Endothelial cell of umbilical vein (primary cell): ENCODE measurements at regions of chr1 and their contacts with region 1.

Region 1: GRCh38 chr1:53393325-53393792 is 65.5 kb upstream of the LRP8 start:
- DNase-seq: peak; percentile 64
- H3K4me3 ChIP-seq: no peak overlapping the region
- H3K27ac ChIP-seq: no peak overlapping the region
- H3K4me1 ChIP-seq: no peaks in the 10 kb centered on the region
- H3K27me3 ChIP-seq: peaks cover 7 to 10% of the 10 kb centered on the region in 2 experiments
- CTCF ChIP-seq: peak; percentile 87 to 91
- POLR2A ChIP-seq: no peak

Region 2: DNA sequence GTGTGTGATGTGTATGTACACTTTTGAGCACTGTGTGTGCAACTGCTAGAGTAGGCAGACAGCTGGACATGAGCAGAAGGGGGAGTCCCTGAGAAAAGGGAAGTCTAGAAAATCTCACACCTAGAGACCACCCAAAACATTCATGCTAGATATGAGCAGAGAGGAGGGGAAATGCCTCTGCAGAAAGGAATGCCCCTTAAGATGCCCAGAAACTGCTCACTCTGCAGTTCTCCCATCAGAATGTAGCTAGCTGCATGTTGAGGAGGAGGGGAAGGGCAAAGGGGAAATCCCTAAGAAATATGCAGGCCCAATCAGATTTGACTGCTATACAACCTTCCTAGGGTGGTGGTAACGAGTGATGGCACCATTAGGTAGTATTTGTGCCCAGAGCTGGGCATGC is 123.3 kb before region 1 on chr1:
- CTCF ChIA-PET with region 1: interaction called, 49 read pairs
- POLR2A ChIA-PET with region 1: no interaction called
- dilution Hi-C with region 1: no loop called
- intact Hi-C with region 1: no loop called
- DNase-seq: no peak
- H3K4me3 ChIP-seq: no peak overlapping the region
- H3K27ac ChIP-seq: no peak overlapping the region
- H3K4me1 ChIP-seq: no peaks in the 10 kb centered on the region
- H3K27me3 ChIP-seq: no peaks in the 10 kb centered on the region
- CTCF ChIP-seq: no peak
- POLR2A ChIP-seq: no peak

Region 3: DNA sequence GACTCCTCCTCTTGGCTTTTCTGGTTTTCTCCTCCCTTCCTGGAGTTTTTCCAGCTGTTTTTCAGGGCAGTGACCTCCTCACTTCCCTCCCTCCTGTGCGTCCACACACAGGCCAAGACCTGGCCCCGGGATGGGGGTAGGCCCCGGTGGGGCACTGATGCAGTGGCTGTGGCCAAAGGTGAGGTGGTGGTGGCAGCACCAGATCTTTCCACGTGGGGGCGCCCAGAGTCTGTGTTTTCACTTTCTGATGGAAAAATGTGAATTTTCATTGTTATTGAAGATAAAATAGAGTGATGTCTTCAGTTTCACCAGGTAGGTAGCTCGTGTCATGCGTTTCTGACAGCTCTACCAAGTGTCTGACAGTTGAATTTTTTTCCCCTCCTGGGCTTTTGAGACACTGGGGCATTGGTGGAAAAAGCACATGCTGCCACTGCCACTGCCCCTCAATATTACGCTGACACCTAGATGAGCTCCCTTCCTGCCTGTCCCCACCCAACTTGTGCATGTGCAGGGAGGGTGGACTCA is 115.1 kb before region 1 on chr1:
- CTCF ChIA-PET with region 1: interaction called, 271 read pairs
- POLR2A ChIA-PET with region 1: no interaction called
- dilution Hi-C with region 1: no loop called
- intact Hi-C with region 1: loop called (anchors 1 kb)
- DNase-seq: peak; percentile 36
- H3K4me3 ChIP-seq: no peak overlapping the region
- H3K27ac ChIP-seq: no peak overlapping the region
- H3K4me1 ChIP-seq: no peaks in the 10 kb centered on the region
- H3K27me3 ChIP-seq: no peaks in the 10 kb centered on the region
- CTCF ChIP-seq: peak; percentile 79 to 83
- POLR2A ChIP-seq: no peak

Region 4: GRCh38 chr1:53294567-53294966 is 98.8 kb before region 1 on chr1:
- CTCF ChIA-PET with region 1: interaction called, 21 read pairs
- POLR2A ChIA-PET with region 1: no interaction called
- dilution Hi-C with region 1: no loop called
- intact Hi-C with region 1: no loop called
- DNase-seq: no peak
- H3K4me3 ChIP-seq: no peak overlapping the region
- H3K27ac ChIP-seq: no peak overlapping the region
- H3K4me1 ChIP-seq: peaks cover 24% of the 10 kb centered on the region
- H3K27me3 ChIP-seq: no peaks in the 10 kb centered on the region
- CTCF ChIP-seq: no peak
- POLR2A ChIP-seq: no peak

Region 5: DNA sequence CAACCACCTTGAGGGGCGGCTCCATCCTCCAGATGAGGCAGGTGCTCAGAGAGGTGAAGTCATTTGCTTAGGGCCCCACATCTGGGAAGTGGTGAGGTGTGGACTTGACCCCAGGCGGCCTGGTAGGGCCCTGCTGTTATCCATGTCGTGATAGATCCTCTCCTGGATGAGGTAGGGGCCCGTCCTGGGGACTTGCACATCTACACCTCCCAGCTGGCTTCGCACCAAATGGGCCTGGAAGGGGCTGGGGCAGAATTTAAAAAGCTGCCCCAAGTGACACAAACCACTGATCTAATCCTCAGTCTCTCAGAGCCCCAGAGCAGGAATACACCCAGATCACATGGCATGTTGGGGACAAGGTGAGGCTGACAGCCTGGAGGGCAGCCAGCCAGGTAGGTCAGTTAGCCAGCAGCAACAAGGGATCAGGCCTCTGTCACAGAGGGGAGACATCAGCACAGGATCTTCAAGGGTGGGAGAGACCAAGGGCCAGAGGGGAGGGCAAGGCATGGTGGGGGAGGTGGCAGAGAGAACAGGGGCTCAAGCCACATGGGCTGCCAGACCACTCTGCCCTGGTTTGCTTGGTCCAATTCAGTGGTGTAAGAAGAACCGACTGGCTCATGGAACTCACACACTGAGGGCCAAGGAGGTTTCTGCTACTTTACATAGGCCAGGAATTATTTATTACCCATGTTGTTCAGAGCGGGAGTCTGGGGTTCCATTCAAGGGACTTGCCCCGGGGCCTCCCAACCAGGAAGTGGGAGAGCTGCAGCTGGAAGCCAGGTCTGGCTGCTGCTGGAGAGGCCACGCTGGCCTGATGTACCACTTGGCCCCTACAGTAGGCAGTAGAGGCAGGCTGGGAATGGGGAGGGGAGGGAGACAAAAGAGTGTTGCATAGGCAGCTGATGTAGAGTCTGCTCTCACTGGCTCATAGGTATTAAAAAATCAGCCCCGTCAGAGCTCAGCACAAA is 77.6 kb before region 1 on chr1:
- CTCF ChIA-PET with region 1: interaction called, 13 read pairs
- POLR2A ChIA-PET with region 1: no interaction called
- dilution Hi-C with region 1: no loop called
- intact Hi-C with region 1: no loop called
- DNase-seq: no peak
- H3K4me3 ChIP-seq: no peak overlapping the region
- H3K27ac ChIP-seq: no peak overlapping the region
- H3K4me1 ChIP-seq: no peaks in the 10 kb centered on the region
- H3K27me3 ChIP-seq: no peaks in the 10 kb centered on the region
- CTCF ChIP-seq: no peak
- POLR2A ChIP-seq: no peak

Region 6: DNA sequence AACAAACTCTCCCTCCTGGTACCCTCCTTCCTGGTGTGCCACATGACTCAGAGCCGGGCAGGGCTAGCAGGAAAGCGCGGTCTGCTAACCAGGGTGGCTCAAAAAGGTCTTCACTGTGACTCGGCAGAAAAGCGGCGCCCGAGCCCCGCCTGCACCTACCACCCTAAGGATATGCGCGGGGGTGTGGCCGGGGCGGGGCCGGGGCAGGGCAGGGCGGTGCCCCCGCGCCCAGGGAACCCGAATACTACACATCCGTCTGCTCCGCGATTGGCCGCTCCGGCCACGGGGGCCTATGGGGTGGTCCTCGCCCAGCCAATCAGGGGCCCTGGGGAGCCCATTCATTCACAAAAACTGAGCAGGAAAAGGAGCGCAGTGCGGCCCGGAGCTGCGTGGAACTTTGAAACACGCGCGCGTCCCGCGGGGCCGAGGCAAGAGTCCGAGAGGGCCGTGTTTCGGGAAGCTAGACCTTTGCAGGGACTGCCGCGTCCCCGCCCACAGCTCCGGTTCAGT is 67.2 kb before region 1 on chr1:
- CTCF ChIA-PET with region 1: interaction called, 10 read pairs
- POLR2A ChIA-PET with region 1: no interaction called
- dilution Hi-C with region 1: no loop called
- intact Hi-C with region 1: loop called (anchors 1 kb)
- DNase-seq: peak; percentile 81
- H3K4me3 ChIP-seq: peak overlapping the region; percentile 53 to 83 (median 79)
- H3K27ac ChIP-seq: peak overlapping the region; percentile 81
- H3K4me1 ChIP-seq: peaks cover 16% of the 10 kb centered on the region
- H3K27me3 ChIP-seq: no peaks in the 10 kb centered on the region
- CTCF ChIP-seq: no peak
- POLR2A ChIP-seq: peak; percentile 76

Region 7: DNA sequence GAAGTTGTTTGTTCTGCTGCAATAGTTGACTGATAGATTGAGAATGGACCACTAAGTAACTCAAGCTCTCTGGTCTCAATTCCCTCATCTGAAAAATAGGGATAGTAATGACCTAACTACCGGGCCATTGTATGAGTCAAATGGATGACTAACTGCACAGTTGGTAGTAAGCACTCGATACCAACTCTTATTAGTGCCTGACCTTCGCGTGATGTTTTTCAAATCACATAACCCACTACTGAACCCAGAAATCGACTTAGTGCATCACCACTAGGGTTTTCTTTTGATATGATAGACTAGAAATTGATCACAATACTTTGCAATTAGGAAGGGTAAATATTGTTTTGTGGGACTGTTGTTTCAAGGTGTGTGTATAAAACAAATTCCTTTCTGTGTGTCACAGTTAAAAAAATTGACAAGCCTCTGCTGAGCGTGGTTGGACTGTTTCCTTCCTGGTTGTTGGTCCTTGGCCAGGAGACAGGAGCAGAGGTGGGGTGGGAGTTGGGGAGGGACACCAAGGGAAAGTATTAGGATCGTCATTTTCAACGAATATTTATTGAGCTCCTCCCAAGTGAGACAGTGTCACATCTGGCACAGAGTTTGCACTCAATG is 11.5 kb before region 1 on chr1:
- CTCF ChIA-PET with region 1: interaction called, 10 read pairs
- POLR2A ChIA-PET with region 1: no interaction called
- dilution Hi-C with region 1: no loop called
- intact Hi-C with region 1: no loop called
- DNase-seq: peak; percentile 7
- H3K4me3 ChIP-seq: no peak overlapping the region
- H3K27ac ChIP-seq: no peak overlapping the region
- H3K4me1 ChIP-seq: no peaks in the 10 kb centered on the region
- H3K27me3 ChIP-seq: peaks cover 5 to 12% of the 10 kb centered on the region in 2 experiments
- CTCF ChIP-seq: no peak
- POLR2A ChIP-seq: no peak